Left ventricle myocardium superior (tissue), 1 donor: ENCODE measurements at regions of chr11 and their contacts with region 1.

Region 1: GRCh38 chr11:74570266-74571061 is 21.9 kb upstream of the POLD3 start:
- DNase-seq: no peak
- ATAC-seq: peak; percentile 73

Region 2: GRCh38 chr11:74388678-74389327 is 181.7 kb before region 1 on chr11:
- intact Hi-C with region 1: loop called (anchors 5 kb)
- DNase-seq: no peak
- ATAC-seq: peak; percentile 75

Region 3: DNA sequence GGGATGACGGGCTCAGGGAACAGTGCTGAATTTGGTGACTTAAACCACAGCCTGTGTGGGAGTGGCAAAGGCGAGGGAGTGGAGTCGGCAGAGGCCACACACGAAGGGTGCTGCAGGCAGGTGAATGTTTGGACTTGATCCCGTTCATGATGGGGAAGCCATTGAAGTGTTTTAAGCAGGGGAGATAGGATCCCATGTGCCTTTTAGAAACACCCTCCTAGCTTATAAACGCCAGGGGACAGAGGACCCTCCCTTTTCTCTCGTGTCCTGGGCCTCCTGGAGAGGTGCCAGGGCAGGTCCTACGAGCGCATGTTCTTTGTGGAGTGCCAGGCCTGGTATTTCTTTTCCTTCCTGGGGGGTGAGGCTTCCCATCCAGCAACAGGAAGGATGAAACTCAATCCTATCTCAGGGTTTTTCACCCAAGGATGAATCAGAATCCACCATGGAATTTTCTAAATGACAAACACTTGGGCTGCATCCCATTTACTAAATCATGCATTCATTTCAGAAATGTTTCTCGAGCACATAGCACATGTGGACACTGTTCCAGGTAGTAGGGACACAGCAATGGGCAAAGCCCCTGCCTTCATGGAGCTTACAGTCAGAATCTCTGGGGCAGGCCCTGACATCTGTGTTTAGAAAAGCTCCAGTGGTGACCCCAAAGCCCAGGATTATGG is 101.2 kb after region 1 on chr11:
- intact Hi-C with region 1: no loop called
- DNase-seq: no peak
- ATAC-seq: no peak